Naive thymus-derived CD4-positive, alpha-beta T cell (primary cell): ENCODE measurements at regions of chr5 and their contacts with region 1.

Region 1: GRCh38 chr5:7868773-7869473 is at the starts of genes FASTKD3 and MTRR:
- DNase-seq: peak; percentile 75 to 90 (median 87)
- ATAC-seq: peak; percentile 100
- H3K4me3 ChIP-seq: peak within 1 kb of the TSS; percentile 75
- H3K4me3 Mint-ChIP-seq: peak within 1 kb of the TSS; percentile 90 to 100 (median 96)
- H3K27ac ChIP-seq: peak within 1 kb of the TSS; percentile 87
- H3K27ac Mint-ChIP-seq: peak within 1 kb of the TSS; percentile 85 to 97 (median 93)
- H3K4me1 ChIP-seq: peaks cover 38 to 43% of the 10 kb centered on the region in 2 donors
- H3K4me1 Mint-ChIP-seq: peaks cover 53 to 84% (median 82%) of the 10 kb centered on the region in 7 donors
- H3K27me3 ChIP-seq: no peaks in the 10 kb centered on the region
- H3K27me3 Mint-ChIP-seq: no peaks in the 10 kb centered on the region
- total RNA-seq, gene FASTKD3: 4.2 to 15.3 (median 10.0) TPM
- total RNA-seq, gene MTRR: 65.7 to 83.2 (median 70.2) TPM

Region 2: DNA sequence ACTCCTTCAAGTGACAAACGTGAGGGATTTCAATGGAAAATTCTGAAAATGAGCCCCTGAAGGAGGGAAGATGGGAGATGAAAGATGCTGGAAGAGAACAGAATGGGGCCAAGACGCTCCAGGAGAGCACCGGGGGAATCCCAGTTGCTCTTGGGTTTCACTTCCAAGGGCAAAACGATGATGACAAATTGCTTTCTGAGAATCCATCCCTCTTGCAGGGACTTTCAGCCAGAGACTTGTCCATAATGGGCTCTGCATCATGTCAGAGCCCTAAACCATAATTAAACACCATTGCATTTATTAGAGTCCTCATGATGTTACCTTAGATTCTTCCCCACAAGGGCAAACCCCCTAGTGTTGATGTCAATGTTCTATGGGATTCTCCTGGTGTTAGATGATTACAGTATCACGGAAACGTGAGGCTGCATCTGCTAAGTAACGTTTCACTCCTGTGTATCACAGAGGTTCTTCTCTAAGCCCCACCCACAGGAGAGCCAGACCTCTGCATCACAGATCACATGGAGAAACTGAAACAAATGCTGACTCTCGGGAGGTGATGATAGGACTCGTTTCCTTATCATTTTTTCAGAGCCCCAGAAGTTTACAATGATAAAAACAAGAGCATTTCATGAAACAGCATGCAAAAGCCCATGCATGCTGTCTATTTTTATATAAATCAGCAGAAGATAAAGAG is 1041.2 kb before region 1 on chr5:
- CTCF ChIA-PET with region 1: no interaction called
- POLR2A ChIA-PET with region 1: no interaction called
- intact Hi-C with region 1: loop called in 1 of 2 experiments (anchors 2 kb)
- DNase-seq: peak in 7 of 9 donors; percentile 15 to 34 (median 27)
- ATAC-seq: peak; percentile 87
- H3K4me3 ChIP-seq: peak overlapping the region; percentile 45
- H3K4me3 Mint-ChIP-seq: peak overlapping the region; percentile 79 to 95 (median 86)
- H3K27ac ChIP-seq: no peak overlapping the region
- H3K27ac Mint-ChIP-seq: peak overlapping the region; percentile 44 to 92 (median 83)
- H3K4me1 ChIP-seq: peaks cover 0 to 5% of the 10 kb centered on the region in 2 donors
- H3K4me1 Mint-ChIP-seq: peaks cover 15 to 59% (median 26%) of the 10 kb centered on the region in 7 donors
- H3K27me3 ChIP-seq: no peaks in the 10 kb centered on the region
- H3K27me3 Mint-ChIP-seq: peaks cover 4 to 18% (median 10%) of the 10 kb centered on the region in 5 donors

Region 3: DNA sequence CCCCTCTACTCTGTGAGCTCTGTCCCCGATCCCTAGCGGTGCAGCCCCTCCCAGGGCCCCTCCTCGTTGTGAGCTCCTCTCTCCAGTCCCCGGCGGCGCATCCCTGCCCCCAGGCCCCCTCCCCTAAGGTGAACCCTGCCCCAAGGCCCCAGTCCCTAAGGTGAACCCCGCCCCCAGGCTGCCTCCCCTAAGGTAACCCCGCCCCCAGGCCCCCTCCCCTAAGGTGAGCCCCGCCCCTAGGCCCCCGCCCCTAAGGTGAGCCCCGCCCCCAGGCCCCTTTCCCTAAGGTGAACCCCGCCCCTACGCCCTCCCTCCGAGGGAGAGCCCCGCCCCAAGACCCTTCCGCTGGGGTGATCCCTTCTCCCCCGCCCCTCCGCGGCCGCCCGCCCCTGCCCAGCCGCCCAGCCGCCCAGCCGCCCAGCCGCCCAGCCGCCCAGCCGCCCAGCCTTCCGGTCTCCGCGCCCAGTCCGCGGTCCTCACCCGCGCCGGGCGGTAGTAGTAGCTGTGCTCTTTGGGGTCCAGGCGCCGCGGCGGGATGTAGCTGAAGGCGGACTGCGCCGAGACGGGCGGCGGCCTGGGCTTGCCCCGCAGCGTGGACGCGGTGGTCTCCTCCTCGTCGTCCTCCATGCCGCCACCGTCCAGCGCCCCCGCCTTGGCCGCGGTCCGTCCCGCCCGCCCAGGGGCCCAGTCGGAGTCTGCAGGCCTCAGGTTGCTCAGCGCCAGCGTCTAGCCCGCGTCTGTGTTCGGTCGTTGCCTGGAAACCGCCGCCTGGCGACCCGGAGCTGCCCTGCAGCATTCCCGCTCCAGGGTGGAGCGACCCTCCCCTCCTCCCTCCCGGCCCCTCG is 18.3 kb before region 1 on chr5 and contains the start of gene CFAP90:
- CTCF ChIA-PET with region 1: no interaction called
- POLR2A ChIA-PET with region 1: interaction called, 3 read pairs
- intact Hi-C with region 1: loop called in 1 of 2 experiments (anchors 1 kb)
- DNase-seq: peak in 4 of 9 donors; percentile 20 to 36 (median 28)
- ATAC-seq: peak; percentile 67
- H3K4me3 ChIP-seq: peak within 1 kb of the TSS; percentile 42
- H3K4me3 Mint-ChIP-seq: peak within 1 kb of the TSS; percentile 79 to 90 (median 84)
- H3K27ac ChIP-seq: no peak within 1 kb of the TSS
- H3K27ac Mint-ChIP-seq: peak within 1 kb of the TSS in 5 of 9 donors; percentile 22 to 84 (median 29)
- H3K4me1 ChIP-seq: peaks cover 0 to 6% of the 10 kb centered on the region in 2 donors
- H3K4me1 Mint-ChIP-seq: peaks cover 19 to 29% (median 22%) of the 10 kb centered on the region in 7 donors
- H3K27me3 ChIP-seq: peaks cover 0 to 14% of the 10 kb centered on the region in 2 donors
- H3K27me3 Mint-ChIP-seq: peaks cover 15 to 52% (median 22%) of the 10 kb centered on the region in 5 donors
- total RNA-seq, gene CFAP90: not detected

Region 4: GRCh38 chr5:7886849-7887475 is 18.0 kb after region 1 on chr5:
- CTCF ChIA-PET with region 1: interaction called, 7 read pairs
- POLR2A ChIA-PET with region 1: no interaction called
- intact Hi-C with region 1: loop called in 1 of 2 experiments (anchors 2 kb)
- DNase-seq: peak in 3 of 9 donors; percentile 19 to 29 (median 23)
- ATAC-seq: no peak
- H3K4me3 ChIP-seq: no peak overlapping the region
- H3K4me3 Mint-ChIP-seq: no peak overlapping the region
- H3K27ac ChIP-seq: no peak overlapping the region
- H3K27ac Mint-ChIP-seq: no peak overlapping the region
- H3K4me1 ChIP-seq: no peaks in the 10 kb centered on the region
- H3K4me1 Mint-ChIP-seq: peaks cover 0 to 9% (median 7%) of the 10 kb centered on the region in 7 donors
- H3K27me3 ChIP-seq: no peaks in the 10 kb centered on the region
- H3K27me3 Mint-ChIP-seq: no peaks in the 10 kb centered on the region